ENCODE measurements at regions of chr1 and their contacts with region 1.

Region 1: DNA sequence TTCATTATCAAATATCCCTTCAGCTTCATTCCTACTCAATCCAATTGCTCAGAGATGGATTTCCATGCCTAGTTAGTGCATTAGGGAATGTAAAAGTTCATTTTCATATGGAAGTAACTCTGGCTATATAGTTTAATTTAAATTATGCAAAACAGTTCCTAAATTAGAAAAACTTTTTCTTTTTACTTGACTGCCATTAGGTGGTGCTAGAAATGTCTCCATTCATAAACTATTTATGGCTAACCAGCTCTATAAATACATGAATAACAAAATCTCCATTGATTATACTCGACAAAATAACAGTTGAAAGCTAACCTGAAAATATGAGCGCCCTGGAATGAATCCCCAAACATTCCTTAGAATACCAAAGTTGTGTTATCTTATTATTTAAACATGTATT is 311.4 kb downstream of the USH2A start:
- DNase-seq: no peak
- H3K4me3 ChIP-seq: no peak overlapping the region
- H3K27ac ChIP-seq: no peak overlapping the region
- H3K4me1 ChIP-seq: no peaks in the 10 kb centered on the region
- H3K27me3 ChIP-seq: peaks cover 14% of the 10 kb centered on the region
- CTCF ChIP-seq: peak; percentile 62; the same call in 1 of the 2 replicates

Region 2: DNA sequence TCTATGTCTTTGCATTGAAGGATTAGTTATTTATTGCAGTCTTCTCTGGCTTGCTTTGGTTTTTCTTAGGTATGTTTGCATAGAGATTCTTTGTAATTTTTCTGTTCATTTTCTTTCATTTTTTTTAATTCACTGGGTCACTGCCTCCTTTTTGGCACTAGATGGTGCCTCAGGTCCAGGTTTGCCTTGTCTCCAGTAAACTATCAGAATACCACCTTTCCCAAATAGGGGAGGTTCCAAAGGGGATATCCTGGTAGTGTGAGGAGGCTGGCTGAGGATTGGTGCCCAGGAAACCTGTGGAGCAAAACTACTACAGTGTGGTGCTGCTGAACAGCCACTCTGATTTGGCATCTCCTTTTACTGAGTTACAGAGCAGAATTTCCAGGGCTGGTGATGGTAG is 287.6 kb before region 1 on chr1:
- CTCF ChIA-PET with region 1: no interaction called
- POLR2A ChIA-PET with region 1: no interaction called
- intact Hi-C with region 1: loop called (anchors 10 kb)
- DNase-seq: peak; percentile 4
- H3K4me3 ChIP-seq: no peak overlapping the region
- H3K27ac ChIP-seq: no peak overlapping the region
- H3K4me1 ChIP-seq: no peaks in the 10 kb centered on the region
- H3K27me3 ChIP-seq: peaks cover 6% of the 10 kb centered on the region
- CTCF ChIP-seq: peak; percentile 33

Region 3: DNA sequence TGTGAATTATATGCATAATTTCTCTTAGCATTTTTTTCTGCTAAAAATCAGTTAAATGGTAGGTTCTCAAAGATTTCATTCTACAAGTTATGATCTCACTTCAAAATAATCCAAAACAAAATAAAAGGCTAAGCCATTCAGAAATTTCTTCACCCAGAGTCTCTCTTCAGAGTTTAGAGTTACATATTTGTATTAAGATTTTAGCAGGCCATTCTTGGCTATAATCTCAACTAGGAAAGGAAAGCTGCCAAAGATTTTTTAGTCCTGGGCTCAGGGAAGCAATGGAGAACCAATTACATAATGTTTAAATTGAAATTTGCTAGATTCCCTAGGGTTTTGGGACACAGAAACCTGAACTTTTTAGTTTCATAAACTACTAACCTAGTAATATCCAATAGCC is 66.4 kb after region 1 on chr1:
- CTCF ChIA-PET with region 1: no interaction called
- POLR2A ChIA-PET with region 1: no interaction called
- intact Hi-C with region 1: loop called (anchors 5 kb)
- DNase-seq: no peak
- H3K4me3 ChIP-seq: no peak overlapping the region
- H3K27ac ChIP-seq: no peak overlapping the region
- H3K4me1 ChIP-seq: no peaks in the 10 kb centered on the region
- H3K27me3 ChIP-seq: peaks cover 74% of the 10 kb centered on the region
- CTCF ChIP-seq: no peak

Region 4: GRCh38 chr1:216210081-216210480 is 98.2 kb after region 1 on chr1:
- CTCF ChIA-PET with region 1: no interaction called
- POLR2A ChIA-PET with region 1: no interaction called
- intact Hi-C with region 1: no loop called
- DNase-seq: no peak
- H3K4me3 ChIP-seq: no peak overlapping the region
- H3K27ac ChIP-seq: no peak overlapping the region
- H3K4me1 ChIP-seq: no peaks in the 10 kb centered on the region
- H3K27me3 ChIP-seq: peaks cover 27% of the 10 kb centered on the region
- CTCF ChIP-seq: no peak

Region 5: DNA sequence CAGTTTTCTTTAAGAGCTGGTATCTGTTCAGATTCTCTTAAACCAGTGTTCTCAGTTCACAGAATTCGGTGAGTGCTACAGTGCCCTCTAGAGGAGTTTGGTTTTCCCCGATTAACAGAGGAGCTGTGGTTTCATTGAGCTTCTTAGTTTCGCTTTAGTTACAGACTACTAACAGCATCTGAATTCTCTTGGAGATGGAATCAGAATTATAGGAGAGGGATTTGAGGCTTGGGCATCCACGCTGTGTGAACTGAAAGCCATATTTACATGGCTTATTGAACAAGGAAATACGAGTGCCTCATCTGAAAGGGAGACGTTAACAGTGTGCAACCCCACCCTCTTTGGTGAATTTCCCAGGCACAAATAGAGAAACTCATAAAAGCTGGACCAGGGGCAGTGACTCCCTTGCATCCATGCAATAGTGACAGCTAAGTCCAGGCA is 109.4 kb after region 1 on chr1:
- CTCF ChIA-PET with region 1: interaction called, 3 read pairs
- POLR2A ChIA-PET with region 1: no interaction called
- intact Hi-C with region 1: loop called (anchors 5 kb)
- DNase-seq: peak; percentile 84
- H3K4me3 ChIP-seq: peak overlapping the region; percentile 37
- H3K27ac ChIP-seq: no peak overlapping the region
- H3K4me1 ChIP-seq: no peaks in the 10 kb centered on the region
- H3K27me3 ChIP-seq: peaks cover 55% of the 10 kb centered on the region
- CTCF ChIP-seq: peak; percentile 85

Region 6: GRCh38 chr1:216270086-216270773 is 158.4 kb after region 1 on chr1:
- CTCF ChIA-PET with region 1: no interaction called
- POLR2A ChIA-PET with region 1: no interaction called
- intact Hi-C with region 1: no loop called
- DNase-seq: peak; percentile 82
- H3K4me3 ChIP-seq: no peak overlapping the region
- H3K27ac ChIP-seq: no peak overlapping the region
- H3K4me1 ChIP-seq: peaks cover 4% of the 10 kb centered on the region
- H3K27me3 ChIP-seq: peaks cover 80% of the 10 kb centered on the region
- CTCF ChIP-seq: no peak